ENCODE measurements at regions of chr16 and their contacts with region 1.

Region 1: GRCh38 chr16:69396187-69397061 is 10.6 kb upstream of the TERF2 start:
- DNase-seq: no peak

Region 2: GRCh38 chr16:69309316-69309715 is 87.1 kb before region 1 on chr16:
- intact Hi-C with region 1: no loop called
- DNase-seq: peak; percentile 63

Region 3: GRCh38 chr16:69367980-69368379 is 28.4 kb before region 1 on chr16:
- intact Hi-C with region 1: no loop called
- DNase-seq: no peak

Region 4: DNA sequence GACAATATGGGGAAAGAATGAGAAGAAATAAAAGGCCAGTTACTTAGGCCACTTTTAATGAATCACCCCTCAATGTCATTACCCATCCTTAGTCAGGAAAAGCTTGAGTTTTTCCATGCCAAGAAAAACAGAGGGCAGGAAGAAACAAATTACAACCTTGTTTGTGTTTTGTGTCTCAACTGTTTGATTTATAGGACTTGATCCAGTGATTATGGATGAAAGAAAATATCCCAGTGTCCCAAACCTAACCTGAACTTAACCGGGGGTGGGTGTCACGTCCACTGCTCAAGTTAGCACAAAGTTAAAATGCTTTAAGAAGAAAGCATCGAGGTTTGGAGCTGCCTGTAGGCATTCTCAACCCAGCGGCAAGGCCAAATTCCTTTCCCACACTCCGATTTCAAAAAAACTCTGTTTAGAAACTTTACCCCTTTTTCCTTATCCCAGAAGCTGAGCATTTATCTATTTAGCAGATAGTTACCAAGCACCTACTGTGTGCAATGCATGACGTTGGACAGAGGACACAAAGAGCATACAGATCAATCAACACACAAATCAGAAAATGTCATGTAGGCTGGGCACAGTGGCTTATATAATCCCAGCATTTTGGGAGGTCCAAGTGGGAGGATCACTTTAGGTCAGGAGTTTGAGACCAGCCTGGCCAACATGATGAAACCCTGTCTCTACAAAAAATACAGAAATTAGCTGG is 14.0 kb after region 1 on chr16:
- intact Hi-C with region 1: no loop called
- DNase-seq: no peak

Region 5: GRCh38 chr16:69443927-69444631 is 47.7 kb after region 1 on chr16:
- intact Hi-C with region 1: loop called (anchors 5 kb)
- DNase-seq: peak; percentile 79

Region 6: DNA sequence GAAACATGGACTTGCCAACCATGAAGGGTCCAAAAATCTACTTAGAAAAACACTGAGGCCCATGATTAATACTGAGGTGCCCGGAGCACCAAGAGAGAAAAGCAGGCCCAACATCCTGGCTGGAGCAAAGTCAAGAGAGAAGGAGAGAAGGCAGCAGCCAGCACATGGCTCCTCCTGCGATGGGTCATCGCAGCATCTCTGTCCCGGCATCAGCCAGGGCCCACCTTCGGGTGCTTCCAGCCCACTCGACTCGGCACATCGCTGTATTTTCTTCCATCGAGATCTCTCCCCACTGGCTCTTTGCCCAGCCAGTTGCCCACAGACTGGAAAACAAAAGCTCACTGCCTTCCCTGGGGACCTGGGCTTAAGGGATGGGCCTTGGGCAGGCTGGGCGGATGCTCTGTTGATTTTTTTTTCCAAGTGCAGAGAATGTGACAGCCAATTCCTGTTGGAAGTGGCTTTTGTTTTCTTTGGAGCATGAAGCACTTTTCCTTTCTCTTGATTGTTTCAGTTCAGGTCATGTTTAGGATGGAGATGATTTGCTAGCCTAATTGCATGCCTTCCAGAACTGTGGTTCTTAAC is 86.1 kb after region 1 on chr16:
- intact Hi-C with region 1: loop called (anchors 5 kb)
- DNase-seq: no peak

Region 7: DNA sequence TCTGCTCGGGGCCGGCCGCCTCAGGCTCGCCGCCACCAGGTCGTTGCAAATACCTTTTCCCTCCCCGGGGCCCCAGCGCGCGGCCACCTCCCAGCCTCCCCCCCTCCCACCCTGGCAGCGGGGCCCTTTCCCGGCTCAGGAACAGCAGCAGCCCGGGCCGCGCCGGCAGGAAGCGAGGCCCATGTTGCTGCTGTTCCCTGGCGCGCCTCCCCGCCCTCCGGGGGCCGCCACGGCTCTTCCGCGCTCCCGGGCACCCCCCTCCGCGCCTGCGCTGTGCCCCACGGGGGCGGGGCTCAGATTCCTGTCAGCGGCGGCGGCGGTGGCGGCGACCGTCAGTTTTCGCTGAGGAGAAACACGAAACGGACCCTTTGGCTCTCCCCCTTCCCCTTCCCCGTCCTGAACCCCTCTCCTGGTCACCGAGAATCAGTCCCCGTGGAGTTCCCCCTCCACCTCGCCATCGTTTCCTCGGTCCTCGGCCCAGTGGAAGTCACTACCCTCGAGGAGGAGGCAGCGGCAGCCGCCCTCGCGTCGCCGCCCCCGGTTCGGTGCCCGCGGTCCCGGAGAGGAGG is 169.3 kb after region 1 on chr16 and contains the start of gene NFAT5:
- intact Hi-C with region 1: loop called (anchors 5 kb)
- DNase-seq: peak; percentile 95
- total RNA-seq, gene NFAT5: 28.5 TPM

Region 8: GRCh38 chr16:69709456-69710084 is 313.1 kb after region 1 on chr16:
- intact Hi-C with region 1: loop called (anchors 5 kb)
- DNase-seq: no peak

Region 9: DNA sequence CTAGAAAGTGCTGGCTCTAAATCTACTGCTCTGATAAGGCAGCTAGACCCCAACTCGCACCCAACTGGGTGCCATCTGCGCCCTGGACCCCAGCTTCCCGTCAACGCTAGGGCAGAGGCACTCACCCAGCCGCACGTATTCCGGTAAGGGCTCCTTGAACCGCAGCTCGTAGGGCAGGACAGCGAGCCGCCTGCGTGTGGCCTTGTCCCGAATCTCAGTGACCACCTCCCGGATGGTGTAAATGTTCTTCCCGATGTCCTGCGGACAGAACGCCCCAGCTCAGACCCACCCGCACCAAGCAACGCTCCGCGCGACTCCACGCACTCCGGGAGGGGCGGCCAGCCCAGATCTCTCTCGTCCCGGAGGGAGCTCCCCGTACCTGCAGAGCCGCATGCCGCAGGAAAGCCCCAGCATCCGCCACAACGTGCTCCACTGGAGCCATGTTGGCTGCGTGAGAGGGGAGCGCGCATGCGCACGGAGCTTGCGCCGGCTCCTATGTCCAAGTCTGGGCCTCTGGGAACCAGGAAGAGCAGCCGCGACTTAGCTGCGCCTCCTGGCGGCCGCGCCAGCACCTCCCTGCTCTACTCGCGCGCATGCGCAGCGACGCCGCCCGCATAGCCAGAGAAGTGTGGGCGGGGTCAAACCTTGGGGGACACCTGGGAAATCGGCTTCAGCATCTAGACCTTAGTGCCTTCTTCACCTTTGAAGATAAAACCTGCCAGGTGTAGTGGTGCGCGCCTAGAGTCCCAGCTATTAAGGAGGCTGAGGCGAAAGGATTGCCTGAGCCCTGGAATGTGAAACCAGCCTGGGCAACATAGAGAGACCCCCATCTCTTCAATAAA is 358.3 kb after region 1 on chr16 and contains the start of gene NOB1:
- intact Hi-C with region 1: loop called (anchors 2 kb)
- DNase-seq: peak; percentile 99
- total RNA-seq, gene NOB1: 16.1 TPM